PC-3 (cell line): ENCODE measurements at regions of chr2 and their contacts with region 1.

Region 1: DNA sequence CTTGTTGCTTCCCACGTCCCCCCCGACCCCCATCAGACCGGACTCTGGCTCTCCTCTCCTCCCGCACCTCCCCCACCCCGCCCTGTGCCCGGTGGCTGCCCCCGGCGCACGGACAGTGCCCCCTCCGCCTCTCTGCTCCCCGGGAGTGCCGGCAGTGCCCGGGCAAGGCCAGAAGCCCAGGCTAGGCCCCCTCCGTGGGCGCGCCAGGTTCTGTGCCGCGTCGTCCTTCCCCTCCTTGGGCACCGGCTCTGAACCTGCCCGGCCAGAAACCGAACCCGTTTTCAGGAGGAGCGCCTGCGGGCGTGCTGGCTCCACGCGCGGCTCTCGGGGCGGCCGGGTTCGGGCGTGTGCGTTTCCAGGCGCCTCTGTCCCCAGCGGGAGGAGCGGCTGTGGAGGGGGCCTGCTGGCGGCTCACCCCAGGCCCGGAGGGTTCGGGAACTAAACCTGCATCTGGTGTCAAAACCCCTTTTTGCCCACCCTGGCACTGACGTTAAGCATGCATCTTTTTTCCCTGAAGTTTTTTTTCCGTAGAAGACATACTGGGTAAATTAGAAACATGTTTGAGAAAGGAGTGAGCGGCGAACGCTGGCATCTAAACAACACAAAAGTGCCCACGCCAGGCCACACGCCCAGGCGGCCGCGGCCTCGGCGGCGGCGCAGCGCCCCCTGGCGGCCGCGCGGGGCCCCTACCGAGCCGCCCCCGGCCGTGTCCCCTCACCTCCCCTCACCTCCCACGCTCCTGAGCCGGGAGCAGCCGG is 123.9 kb upstream of the SLC1A4 start:
- DNase-seq: peak; percentile 73
- ATAC-seq: peak; percentile 82
- H3K4me3 ChIP-seq: peak overlapping the region; percentile 68
- H3K27ac ChIP-seq: peak overlapping the region; percentile 81
- H3K4me1 ChIP-seq: peaks cover 35% of the 10 kb centered on the region
- H3K27me3 ChIP-seq: no peaks in the 10 kb centered on the region
- CTCF ChIP-seq: peak; percentile 68

Region 2: GRCh38 chr2:64644177-64645004 is 220.9 kb before region 1 on chr2:
- CTCF ChIA-PET with region 1: no interaction called
- POLR2A ChIA-PET with region 1: interaction called, 3 read pairs
- intact Hi-C with region 1: loop called (anchors 1 kb)
- DNase-seq: peak; percentile 80
- ATAC-seq: peak; percentile 68
- H3K4me3 ChIP-seq: peak overlapping the region; percentile 67
- H3K27ac ChIP-seq: peak overlapping the region; percentile 92
- H3K4me1 ChIP-seq: peaks cover 87% of the 10 kb centered on the region
- H3K27me3 ChIP-seq: no peaks in the 10 kb centered on the region
- CTCF ChIP-seq: no peak

Region 3: GRCh38 chr2:64792307-64792706 is 72.9 kb before region 1 on chr2:
- CTCF ChIA-PET with region 1: interaction called, 12 read pairs
- POLR2A ChIA-PET with region 1: no interaction called
- intact Hi-C with region 1: loop called (anchors 1 kb)
- DNase-seq: peak; percentile 43
- ATAC-seq: peak; percentile 12; the same call in 1 of the 2 replicates
- H3K4me3 ChIP-seq: no peak overlapping the region
- H3K27ac ChIP-seq: peak overlapping the region; percentile 86; the same call in 1 of the 2 replicates
- H3K4me1 ChIP-seq: peaks cover 51% of the 10 kb centered on the region
- H3K27me3 ChIP-seq: no peaks in the 10 kb centered on the region
- CTCF ChIP-seq: peak; percentile 50; the same call in 1 of the 2 replicates